Right ventricle myocardium inferior (tissue), 1 donor: ENCODE measurements at regions of chr3 and their contacts with region 1.

Region 1: DNA sequence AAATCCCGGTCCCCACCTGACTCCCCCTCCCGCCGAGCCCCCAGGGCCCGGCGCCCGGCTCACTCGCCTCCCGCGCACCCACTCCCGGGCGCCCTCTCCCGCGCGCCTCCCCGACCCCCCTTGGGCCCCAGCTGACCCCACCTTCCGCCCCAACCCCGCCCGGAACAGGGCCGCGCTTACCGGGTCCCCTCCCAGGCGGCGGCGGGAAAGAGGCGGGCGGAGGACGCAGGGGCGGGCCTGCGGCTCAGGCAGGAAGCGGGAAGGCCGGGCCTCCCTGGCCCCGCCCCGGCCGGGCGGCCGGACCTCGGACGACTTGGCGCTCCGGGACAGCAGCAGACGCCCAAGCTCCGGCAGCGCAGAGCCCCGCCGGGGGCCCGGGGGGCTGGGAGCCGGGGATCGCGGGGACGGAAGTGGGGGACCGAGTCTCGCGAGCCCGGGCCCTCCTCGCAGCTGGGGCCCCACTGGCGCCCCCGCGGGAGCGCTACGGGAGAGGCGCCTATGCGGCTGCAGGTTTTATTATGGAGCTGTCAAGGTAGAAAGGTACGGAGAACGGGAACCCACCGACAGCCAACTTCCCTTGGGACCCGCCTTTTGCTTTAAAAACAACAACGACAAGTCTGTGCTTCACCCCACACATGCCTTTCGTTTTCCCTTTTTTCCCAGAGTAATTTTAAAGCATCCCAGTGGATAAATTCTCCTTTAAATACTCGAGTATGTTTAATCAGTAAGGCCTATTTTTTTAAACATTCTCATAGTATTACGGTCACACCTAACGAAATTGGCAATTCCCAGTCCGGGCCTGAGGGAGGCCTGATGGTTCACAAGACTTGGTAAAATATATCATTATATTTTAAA is at the start of gene SLC41A3:
- DNase-seq: peak; percentile 91
- ATAC-seq: peak; percentile 99
- total RNA-seq, gene SLC41A3: 36.2 TPM

Region 2: GRCh38 chr3:125602752-125603649 is 481.1 kb before region 1 on chr3:
- intact Hi-C with region 1: no loop called
- DNase-seq: no peak
- ATAC-seq: no peak

Region 3: DNA sequence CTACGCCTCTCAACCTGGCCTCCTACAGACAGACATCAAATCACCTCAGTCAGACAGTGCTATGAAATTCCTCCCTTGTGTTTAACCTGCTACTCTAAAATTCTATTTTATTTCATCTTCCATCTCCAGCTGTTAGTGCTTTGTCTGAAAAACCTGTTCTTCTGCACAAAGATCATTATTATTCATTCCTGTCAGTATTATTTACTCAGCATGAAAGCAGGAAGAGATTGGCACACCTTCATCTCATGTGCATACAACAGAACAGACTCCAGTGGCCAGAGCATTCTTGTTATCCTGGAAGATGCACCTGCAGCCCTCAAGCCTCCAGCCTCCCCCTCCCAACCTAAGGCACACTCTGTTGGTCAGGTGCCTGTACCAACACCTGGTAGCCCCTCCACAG is 117.0 kb before region 1 on chr3:
- intact Hi-C with region 1: loop called (anchors 5 kb)
- DNase-seq: no peak
- ATAC-seq: no peak

Region 4: GRCh38 chr3:125990253-125990970 is 93.7 kb before region 1 on chr3:
- intact Hi-C with region 1: loop called (anchors 5 kb)
- DNase-seq: peak; percentile 96
- ATAC-seq: peak; percentile 99